PC-9 (cell line): ENCODE measurements at regions of chr4 and their contacts with region 1.

Region 1: GRCh38 chr4:152045807-152046571 is 285.2 kb upstream of the GATB start:
- DNase-seq: peak; percentile 60 to 63
- H3K4me3 ChIP-seq: peak overlapping the region; percentile 21; the same call in 1 of the 2 replicates
- H3K27ac ChIP-seq: no peak overlapping the region
- H3K4me1 ChIP-seq: no peaks in the 10 kb centered on the region; the same call in 1 of the 2 replicates
- H3K27me3 ChIP-seq: no peaks in the 10 kb centered on the region
- CTCF ChIP-seq: peak; percentile 42; the same call in 1 of the 2 replicates

Region 2: DNA sequence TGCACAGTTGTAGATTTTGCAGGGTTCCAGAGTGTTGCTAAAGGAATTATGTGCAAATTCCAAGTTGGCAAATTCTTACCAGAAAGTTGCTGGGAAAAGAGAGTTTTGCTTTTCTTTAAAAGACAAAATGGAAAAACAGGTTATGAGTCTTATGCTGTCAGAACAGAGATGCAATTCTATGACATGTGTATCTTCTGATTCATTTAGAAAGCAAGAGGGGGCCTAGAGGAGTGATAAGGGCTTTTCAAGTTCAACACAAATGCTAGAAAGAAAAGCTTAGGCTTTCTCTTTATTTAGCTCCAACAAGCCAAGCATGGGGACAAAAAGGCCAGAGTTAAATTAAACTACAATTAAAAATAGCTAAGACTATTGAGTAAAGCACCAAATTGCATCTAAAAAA is 212.8 kb before region 1 on chr4:
- CTCF ChIA-PET with region 1: no interaction called
- POLR2A ChIA-PET with region 1: no interaction called
- intact Hi-C with region 1: no loop called
- DNase-seq: no peak
- H3K4me3 ChIP-seq: no peak overlapping the region
- H3K27ac ChIP-seq: no peak overlapping the region
- H3K4me1 ChIP-seq: no peaks in the 10 kb centered on the region
- H3K27me3 ChIP-seq: no peaks in the 10 kb centered on the region
- CTCF ChIP-seq: no peak

Region 3: GRCh38 chr4:152294331-152294730 is 248.3 kb after region 1 on chr4:
- CTCF ChIA-PET with region 1: no interaction called
- POLR2A ChIA-PET with region 1: no interaction called
- intact Hi-C with region 1: no loop called
- DNase-seq: no peak
- H3K4me3 ChIP-seq: no peak overlapping the region
- H3K27ac ChIP-seq: no peak overlapping the region
- H3K4me1 ChIP-seq: no peaks in the 10 kb centered on the region
- H3K27me3 ChIP-seq: no peaks in the 10 kb centered on the region
- CTCF ChIP-seq: no peak

Region 4: DNA sequence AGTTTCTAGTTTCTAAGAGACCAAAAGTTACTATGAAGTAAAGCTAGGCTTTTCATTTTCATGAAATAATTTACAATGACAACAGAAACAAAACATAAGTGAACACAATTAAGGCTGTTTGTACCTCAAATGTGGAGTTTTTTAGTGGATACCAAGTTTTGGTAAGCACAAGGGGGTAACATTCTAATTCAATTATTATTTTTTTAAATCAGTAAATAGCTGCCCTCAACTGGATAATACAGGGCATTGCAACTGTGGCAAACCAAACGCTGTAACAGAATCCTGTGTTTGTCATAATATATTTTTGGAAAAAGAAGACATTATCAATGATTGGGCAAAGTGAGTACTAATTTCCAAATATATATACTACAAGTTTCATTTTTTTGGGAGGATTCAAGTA is 339.6 kb after region 1 on chr4:
- CTCF ChIA-PET with region 1: no interaction called
- POLR2A ChIA-PET with region 1: no interaction called
- intact Hi-C with region 1: loop called (anchors 5 kb)
- DNase-seq: no peak
- H3K4me3 ChIP-seq: no peak overlapping the region
- H3K27ac ChIP-seq: no peak overlapping the region
- H3K4me1 ChIP-seq: no peaks in the 10 kb centered on the region
- H3K27me3 ChIP-seq: no peaks in the 10 kb centered on the region
- CTCF ChIP-seq: peak; percentile 66; the same call in 1 of the 2 replicates

Region 5: GRCh38 chr4:152591396-152591795 is 545.4 kb after region 1 on chr4:
- CTCF ChIA-PET with region 1: no interaction called
- POLR2A ChIA-PET with region 1: no interaction called
- intact Hi-C with region 1: no loop called
- DNase-seq: no peak
- H3K4me3 ChIP-seq: no peak overlapping the region
- H3K27ac ChIP-seq: no peak overlapping the region
- H3K4me1 ChIP-seq: peaks cover 16% of the 10 kb centered on the region; the same call in 1 of the 2 replicates
- H3K27me3 ChIP-seq: no peaks in the 10 kb centered on the region
- CTCF ChIP-seq: no peak

Region 6: DNA sequence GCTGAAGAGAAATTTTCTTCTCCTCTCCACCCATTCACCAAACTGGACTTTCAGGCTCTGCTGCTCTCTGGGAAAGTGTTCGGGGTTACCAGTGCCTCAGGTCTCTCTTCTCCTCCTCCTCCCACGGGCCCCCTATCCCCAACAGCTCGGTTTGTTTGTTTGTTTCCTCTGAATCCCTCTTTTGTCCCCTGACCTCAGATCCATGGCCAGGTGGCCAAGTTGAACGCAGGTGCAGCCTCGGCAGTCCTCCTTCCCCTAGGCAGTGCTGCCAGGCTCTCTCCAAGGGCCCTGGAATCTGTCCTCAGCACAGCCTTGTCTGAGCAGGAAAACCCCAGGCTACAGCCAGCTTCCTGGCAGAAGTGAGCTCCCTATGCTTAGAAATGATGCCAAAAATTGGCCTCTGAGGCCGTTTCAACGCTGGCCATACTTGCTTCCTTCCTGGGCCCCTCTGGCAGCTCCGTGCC is 950.2 kb after region 1 on chr4:
- CTCF ChIA-PET with region 1: no interaction called
- POLR2A ChIA-PET with region 1: no interaction called
- intact Hi-C with region 1: no loop called
- DNase-seq: peak; percentile 78 to 85
- H3K4me3 ChIP-seq: peak overlapping the region; percentile 31; the same call in 1 of the 2 replicates
- H3K27ac ChIP-seq: peak overlapping the region; percentile 84
- H3K4me1 ChIP-seq: peaks cover 53% of the 10 kb centered on the region
- H3K27me3 ChIP-seq: no peaks in the 10 kb centered on the region
- CTCF ChIP-seq: no peak